CD8-positive, alpha-beta T cell (primary cell): ENCODE measurements at regions of chr7 and their contacts with region 1.

Region 1: DNA sequence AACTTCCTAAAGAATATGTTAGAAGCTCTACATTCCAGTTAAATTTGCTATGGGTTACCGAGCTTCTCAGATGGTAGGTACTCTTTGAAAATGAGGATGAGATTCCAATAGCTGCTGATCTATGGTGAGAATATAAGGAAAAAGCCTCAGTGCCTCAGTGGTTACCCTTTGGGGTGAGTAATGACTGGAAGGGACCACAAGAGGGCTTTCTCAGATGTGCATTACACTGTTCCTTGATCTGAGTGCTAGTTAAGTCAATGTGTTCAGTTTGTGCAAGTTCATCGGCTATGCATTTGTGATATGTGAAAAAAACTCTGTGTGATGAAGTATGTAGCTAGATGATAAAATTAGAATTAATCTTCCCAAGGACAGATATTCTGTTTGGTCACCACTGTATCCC is 3.5 kb downstream of the NRCAM start:
- DNase-seq: peak in 3 of 9 experiments; percentile 26 to 67 (median 41)
- ATAC-seq: peak; percentile 54
- H3K4me3 ChIP-seq: no peak overlapping the region
- H3K4me3 Mint-ChIP-seq: no peak overlapping the region
- H3K27ac ChIP-seq: no peak overlapping the region
- H3K27ac Mint-ChIP-seq: no peak overlapping the region
- H3K4me1 ChIP-seq: peaks cover 28% of the 10 kb centered on the region
- H3K4me1 Mint-ChIP-seq: peaks cover 41% of the 10 kb centered on the region
- H3K27me3 ChIP-seq: peaks cover 0 to 4% of the 10 kb centered on the region in 2 experiments
- H3K27me3 Mint-ChIP-seq: peaks cover 16% of the 10 kb centered on the region
- CTCF ChIP-seq: peak; percentile 57

Region 2: GRCh38 chr7:108181073-108181985 is 271.4 kb before region 1 on chr7:
- CTCF ChIA-PET with region 1: interaction called, 8 read pairs
- POLR2A ChIA-PET with region 1: no interaction called
- intact Hi-C with region 1: loop called (anchors 2 kb)
- DNase-seq: peak in 2 of 9 experiments; percentile 51 to 66
- ATAC-seq: peak; percentile 59
- H3K4me3 ChIP-seq: no peak overlapping the region
- H3K4me3 Mint-ChIP-seq: no peak overlapping the region
- H3K27ac ChIP-seq: no peak overlapping the region
- H3K27ac Mint-ChIP-seq: no peak overlapping the region
- H3K4me1 ChIP-seq: no peaks in the 10 kb centered on the region
- H3K4me1 Mint-ChIP-seq: no peaks in the 10 kb centered on the region
- H3K27me3 ChIP-seq: no peaks in the 10 kb centered on the region
- H3K27me3 Mint-ChIP-seq: no peaks in the 10 kb centered on the region
- CTCF ChIP-seq: peak; percentile 94

Region 3: DNA sequence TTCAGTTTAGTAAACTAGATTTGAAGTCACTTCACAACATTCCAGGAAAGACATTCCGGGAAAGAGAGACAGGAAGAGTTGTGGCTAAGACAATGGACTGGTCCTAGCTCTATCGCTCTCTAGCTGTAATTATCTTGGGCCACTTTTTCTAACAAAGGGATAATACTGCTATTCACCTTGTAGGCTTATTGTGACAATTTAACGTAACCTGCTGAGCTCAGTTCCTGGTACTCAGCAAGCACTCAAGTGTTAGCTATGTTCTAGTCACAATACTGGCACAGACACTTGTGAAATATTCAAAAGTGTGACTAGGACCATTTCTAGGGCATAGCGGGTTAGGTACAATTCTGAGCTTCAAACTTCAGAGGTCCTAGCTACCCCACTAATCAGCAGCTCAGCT is 15.5 kb after region 1 on chr7:
- CTCF ChIA-PET with region 1: interaction called, 27 read pairs
- POLR2A ChIA-PET with region 1: interaction called, 3 read pairs
- intact Hi-C with region 1: no loop called
- DNase-seq: no peak
- ATAC-seq: no peak
- H3K4me3 ChIP-seq: no peak overlapping the region
- H3K4me3 Mint-ChIP-seq: no peak overlapping the region
- H3K27ac ChIP-seq: no peak overlapping the region
- H3K27ac Mint-ChIP-seq: no peak overlapping the region
- H3K4me1 ChIP-seq: peaks cover 25% of the 10 kb centered on the region
- H3K4me1 Mint-ChIP-seq: peaks cover 45% of the 10 kb centered on the region
- H3K27me3 ChIP-seq: no peaks in the 10 kb centered on the region
- H3K27me3 Mint-ChIP-seq: no peaks in the 10 kb centered on the region
- CTCF ChIP-seq: no peak

Region 4: DNA sequence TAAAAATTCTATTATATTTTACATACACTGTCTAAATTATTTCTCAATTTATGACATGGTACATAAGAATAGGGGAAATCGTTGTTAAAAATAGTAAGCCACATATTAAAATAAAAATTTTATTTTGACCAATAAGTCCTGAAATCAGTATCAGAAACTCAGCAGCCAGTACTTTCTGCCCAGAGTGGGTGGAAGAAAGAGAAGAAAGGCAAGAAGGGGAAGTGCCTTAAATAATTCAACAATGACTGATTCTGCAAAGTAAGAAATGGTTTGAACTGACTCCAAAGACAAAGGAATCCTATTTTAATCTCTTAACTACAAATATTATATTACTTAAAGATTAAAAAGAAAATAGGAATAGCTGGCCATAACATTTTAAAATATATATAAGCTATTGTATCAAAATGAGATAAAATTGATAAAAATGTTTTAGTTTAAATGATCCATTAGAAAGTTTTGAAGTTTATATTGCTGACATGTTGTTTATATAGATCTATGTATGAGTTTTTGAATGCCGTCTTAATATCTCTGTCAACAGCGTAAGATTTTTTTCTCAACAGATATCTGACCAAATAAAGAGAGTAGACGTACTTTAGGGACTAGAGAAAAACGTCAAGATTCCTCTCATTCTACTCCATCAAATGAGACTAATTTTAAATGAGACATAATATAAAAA is 33.7 kb after region 1 on chr7:
- CTCF ChIA-PET with region 1: interaction called, 13 read pairs
- POLR2A ChIA-PET with region 1: no interaction called
- intact Hi-C with region 1: loop called in 1 of 2 experiments (anchors 1 kb)
- DNase-seq: no peak
- ATAC-seq: no peak
- H3K4me3 ChIP-seq: no peak overlapping the region
- H3K4me3 Mint-ChIP-seq: no peak overlapping the region
- H3K27ac ChIP-seq: no peak overlapping the region
- H3K27ac Mint-ChIP-seq: no peak overlapping the region
- H3K4me1 ChIP-seq: no peaks in the 10 kb centered on the region
- H3K4me1 Mint-ChIP-seq: no peaks in the 10 kb centered on the region
- H3K27me3 ChIP-seq: no peaks in the 10 kb centered on the region
- H3K27me3 Mint-ChIP-seq: no peaks in the 10 kb centered on the region
- CTCF ChIP-seq: no peak

Region 5: DNA sequence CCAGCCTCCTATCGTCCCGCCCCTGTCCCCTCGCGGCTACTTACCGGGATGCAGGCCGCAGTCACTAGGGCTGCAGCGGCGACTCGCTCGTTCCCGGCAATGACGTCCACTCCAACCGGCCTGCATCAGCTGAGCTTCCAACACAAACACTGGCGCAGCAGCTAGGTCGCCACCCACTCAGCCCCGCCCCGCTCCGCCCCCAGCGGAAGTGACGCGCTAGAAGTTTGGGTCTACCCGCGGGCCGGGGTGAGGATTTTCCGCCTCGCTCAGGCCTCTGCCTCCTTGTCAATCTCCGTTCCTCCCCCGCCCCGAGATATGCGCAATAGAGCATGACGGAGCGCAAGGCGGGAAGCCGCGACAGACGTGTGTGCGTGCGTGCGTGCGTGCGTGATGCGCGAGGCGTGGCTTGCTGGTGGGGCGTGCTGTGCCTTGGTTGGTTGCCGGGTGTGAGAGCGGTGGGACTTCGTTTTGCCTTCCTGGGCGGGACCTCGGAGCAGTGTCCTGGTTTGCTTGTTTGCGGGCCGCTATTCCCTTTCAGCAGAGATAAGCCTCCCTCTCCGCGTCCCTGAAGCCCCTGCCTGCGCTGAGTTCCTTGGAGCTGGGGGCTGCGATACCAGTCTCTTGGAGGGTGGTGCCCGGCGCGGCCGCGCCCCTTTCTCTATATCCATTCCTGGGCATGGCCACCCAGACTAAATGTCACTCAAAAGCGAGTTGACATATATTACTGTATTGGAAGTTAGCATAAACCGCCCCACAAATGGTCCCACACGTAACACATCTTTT is 73.5 kb after region 1 on chr7 and contains the start of gene PNPLA8:
- CTCF ChIA-PET with region 1: interaction called, 4 read pairs
- POLR2A ChIA-PET with region 1: interaction called, 6 read pairs
- intact Hi-C with region 1: loop called in 1 of 2 experiments (anchors 1 kb)
- DNase-seq: peak; percentile 100
- ATAC-seq: peak; percentile 90
- H3K4me3 ChIP-seq: peak within 1 kb of the TSS; percentile 80 to 93
- H3K4me3 Mint-ChIP-seq: peak within 1 kb of the TSS; percentile 97
- H3K27ac ChIP-seq: peak within 1 kb of the TSS; percentile 94 to 96
- H3K27ac Mint-ChIP-seq: peak within 1 kb of the TSS; percentile 99
- H3K4me1 ChIP-seq: peaks cover 21% of the 10 kb centered on the region
- H3K4me1 Mint-ChIP-seq: peaks cover 48% of the 10 kb centered on the region
- H3K27me3 ChIP-seq: no peaks in the 10 kb centered on the region
- H3K27me3 Mint-ChIP-seq: no peaks in the 10 kb centered on the region
- CTCF ChIP-seq: no peak
- total RNA-seq, gene PNPLA8: 98.6 to 101 TPM

Region 6: GRCh38 chr7:108569381-108570145 is 116.8 kb after region 1 on chr7 and contains the starts of genes DNAJB9 and THAP5:
- CTCF ChIA-PET with region 1: no interaction called
- POLR2A ChIA-PET with region 1: interaction called, 4 read pairs
- intact Hi-C with region 1: loop called (anchors 2 to 5 kb)
- DNase-seq: peak; percentile 98 to 100 (median 99)
- ATAC-seq: peak; percentile 84
- H3K4me3 ChIP-seq: peak within 1 kb of the TSS; percentile 90 to 96
- H3K4me3 Mint-ChIP-seq: peak within 1 kb of the TSS; percentile 90
- H3K27ac ChIP-seq: peak within 1 kb of the TSS; percentile 99 to 100
- H3K27ac Mint-ChIP-seq: peak within 1 kb of the TSS; percentile 98
- H3K4me1 ChIP-seq: peaks cover 45% of the 10 kb centered on the region
- H3K4me1 Mint-ChIP-seq: peaks cover 65% of the 10 kb centered on the region
- H3K27me3 ChIP-seq: no peaks in the 10 kb centered on the region
- H3K27me3 Mint-ChIP-seq: no peaks in the 10 kb centered on the region
- CTCF ChIP-seq: no peak
- total RNA-seq, gene DNAJB9: 66.7 to 67.7 TPM
- total RNA-seq, gene THAP5: 10.7 to 13.5 TPM